ENCODE measurements at regions of chrX and their contacts with region 1.

Region 1: DNA sequence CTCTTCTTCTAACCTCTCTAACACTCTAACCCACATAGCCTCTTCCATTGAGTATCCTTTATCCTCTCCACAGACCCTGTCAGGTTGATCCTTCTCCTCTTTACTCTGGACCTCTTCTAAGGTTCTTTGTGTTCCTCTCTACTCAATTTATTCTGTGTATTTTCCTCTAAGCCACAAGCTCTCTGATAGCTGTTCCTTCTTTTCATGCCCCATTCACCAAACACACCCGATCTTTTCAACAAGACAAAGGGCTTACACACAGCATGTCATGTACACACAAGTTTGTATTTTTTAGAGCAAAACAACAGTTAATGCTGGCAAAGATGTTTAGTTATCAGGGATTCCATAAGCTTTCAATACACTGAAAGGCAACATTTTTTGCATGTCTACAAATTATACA is 1.9 kb downstream of the SPIN2B start:
- DNase-seq: no peak
- H3K4me3 ChIP-seq: no peak overlapping the region
- H3K27ac ChIP-seq: no peak overlapping the region
- H3K4me1 ChIP-seq: no peaks in the 10 kb centered on the region
- H3K27me3 ChIP-seq: no peaks in the 10 kb centered on the region
- CTCF ChIP-seq: no peak

Region 2: GRCh38 chrX:56113785-56114436 is 1005.5 kb before region 1 on chrX:
- intact Hi-C with region 1: no loop called
- DNase-seq: no peak
- H3K4me3 ChIP-seq: no peak overlapping the region
- H3K27ac ChIP-seq: no peak overlapping the region
- H3K4me1 ChIP-seq: no peaks in the 10 kb centered on the region
- H3K27me3 ChIP-seq: no peaks in the 10 kb centered on the region
- CTCF ChIP-seq: no peak

Region 3: GRCh38 chrX:56882581-56882980 is 236.8 kb before region 1 on chrX:
- intact Hi-C with region 1: no loop called
- DNase-seq: no peak
- H3K4me3 ChIP-seq: no peak overlapping the region
- H3K27ac ChIP-seq: no peak overlapping the region
- H3K4me1 ChIP-seq: no peaks in the 10 kb centered on the region
- H3K27me3 ChIP-seq: no peaks in the 10 kb centered on the region
- CTCF ChIP-seq: no peak

Region 4: DNA sequence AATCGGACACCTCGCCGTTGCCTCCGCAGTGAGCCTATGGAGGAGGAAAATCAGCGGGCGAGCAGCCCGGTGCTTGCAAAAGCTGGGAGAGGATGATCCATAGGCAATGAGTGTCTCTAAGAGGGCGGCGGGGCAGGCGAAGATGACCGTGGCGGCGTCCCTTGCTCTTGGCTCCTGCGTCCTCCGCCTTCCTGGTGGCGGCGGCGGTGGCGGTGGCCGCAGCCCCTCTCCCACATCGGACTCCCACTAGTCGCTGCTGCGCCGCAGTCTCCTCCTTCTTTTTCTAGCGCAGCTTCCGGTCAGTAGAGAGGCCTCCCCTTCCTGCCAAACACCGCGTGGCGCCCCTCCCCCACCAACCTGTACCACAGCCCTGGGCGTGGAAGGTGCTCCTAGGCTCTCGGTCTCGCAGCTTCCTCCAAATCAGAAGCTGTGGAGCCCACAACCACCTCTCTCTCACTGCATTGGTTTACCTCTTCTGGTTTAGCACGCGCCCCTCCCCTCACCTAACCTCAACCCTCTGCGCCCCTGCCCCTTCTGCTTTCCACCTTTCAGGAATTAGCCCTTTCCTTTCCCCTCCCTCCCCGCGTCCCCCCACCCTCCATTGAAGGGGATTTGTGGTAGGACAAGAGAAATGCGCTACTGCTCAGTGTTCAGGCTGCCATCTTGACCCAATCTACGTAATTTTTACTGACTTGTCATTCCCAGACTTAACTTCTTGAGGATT is 124.0 kb before region 1 on chrX and contains the start of gene SPIN3:
- intact Hi-C with region 1: loop called (anchors 10 kb)
- DNase-seq: peak in 1 of 2 donors; percentile 84
- H3K4me3 ChIP-seq: peak within 1 kb of the TSS; percentile 48 to 78
- H3K27ac ChIP-seq: peak within 1 kb of the TSS; percentile 28 to 74
- H3K4me1 ChIP-seq: no peaks in the 10 kb centered on the region
- H3K27me3 ChIP-seq: no peaks in the 10 kb centered on the region
- CTCF ChIP-seq: no peak
- total RNA-seq, gene SPIN3: 3.9 TPM

Region 5: DNA sequence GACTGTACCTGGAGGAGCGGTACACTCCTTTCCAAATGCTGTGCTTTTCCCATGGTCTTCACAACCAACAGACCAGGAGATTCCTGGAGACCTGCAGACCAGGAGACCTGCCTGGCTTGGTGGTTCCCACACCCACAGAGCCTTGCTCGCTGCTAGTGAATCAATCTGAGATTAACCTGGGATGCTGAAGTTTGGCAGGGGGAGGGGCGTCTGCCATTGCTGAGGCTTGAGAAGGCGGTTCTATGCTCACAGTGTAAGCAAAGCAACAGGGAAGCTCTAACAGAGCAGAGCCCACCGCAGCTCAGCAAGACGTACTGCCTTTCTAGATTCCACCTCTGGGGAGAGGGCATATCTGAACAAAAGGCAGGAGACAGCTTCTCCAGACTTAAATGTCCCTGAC is 132.5 kb after region 1 on chrX:
- intact Hi-C with region 1: no loop called
- DNase-seq: no peak
- H3K4me3 ChIP-seq: no peak overlapping the region
- H3K27ac ChIP-seq: no peak overlapping the region
- H3K4me1 ChIP-seq: no peaks in the 10 kb centered on the region
- H3K27me3 ChIP-seq: no peaks in the 10 kb centered on the region
- CTCF ChIP-seq: no peak